CD8-positive, alpha-beta memory T cell (primary cell): ENCODE measurements at regions of chr2 and their contacts with region 1.

Region 1: GRCh38 chr2:162301151-162301804 is 17.2 kb downstream of the IFIH1 start:
- DNase-seq: peak; percentile 35 to 64 (median 41)
- H3K4me3 ChIP-seq: no peak overlapping the region
- H3K4me3 Mint-ChIP-seq: no peak overlapping the region
- H3K27ac ChIP-seq: no peak overlapping the region
- H3K27ac Mint-ChIP-seq: peak overlapping the region in 1 of 8 donors; percentile 66
- H3K4me1 ChIP-seq: no peaks in the 10 kb centered on the region
- H3K4me1 Mint-ChIP-seq: peaks cover 1 to 7% (median 6%) of the 10 kb centered on the region in 3 donors
- H3K27me3 ChIP-seq: no peaks in the 10 kb centered on the region
- H3K27me3 Mint-ChIP-seq: no peaks in the 10 kb centered on the region

Region 2: DNA sequence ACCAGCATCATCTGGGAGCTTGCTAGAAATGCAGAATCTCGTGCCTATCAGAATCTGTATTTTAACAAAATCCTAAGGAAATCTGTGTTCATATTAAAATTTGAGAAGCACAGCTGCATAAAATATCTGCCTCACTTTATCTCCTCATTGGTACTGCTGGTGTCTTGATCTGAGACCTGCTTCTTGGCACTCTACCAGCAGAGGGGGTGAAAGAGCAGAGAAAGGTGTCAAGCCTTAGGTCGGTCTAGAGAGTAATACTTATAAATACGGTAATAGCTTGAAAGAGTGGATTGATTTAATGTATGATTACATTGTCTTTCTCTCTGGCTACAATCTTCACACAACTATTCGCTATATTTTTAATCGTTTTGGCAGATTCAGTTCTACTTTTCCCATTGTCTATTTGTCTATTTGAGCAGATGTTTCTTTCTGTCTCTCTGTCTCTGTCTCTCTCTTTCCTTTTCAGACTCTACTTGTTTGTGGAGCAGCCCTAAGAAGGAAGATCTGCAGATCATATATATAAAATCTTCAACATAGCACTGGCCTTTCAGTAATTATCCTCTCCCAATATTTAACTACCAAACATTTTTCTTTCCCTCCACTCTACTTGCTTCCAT is 147.6 kb before region 1 on chr2:
- CTCF ChIA-PET with region 1: interaction called, 10 read pairs
- POLR2A ChIA-PET with region 1: no interaction called
- DNase-seq: peak; percentile 9 to 63 (median 32)
- H3K4me3 ChIP-seq: no peak overlapping the region
- H3K4me3 Mint-ChIP-seq: peak overlapping the region in 6 of 7 donors; percentile 4 to 30 (median 16)
- H3K27ac ChIP-seq: no peak overlapping the region
- H3K27ac Mint-ChIP-seq: no peak overlapping the region
- H3K4me1 ChIP-seq: no peaks in the 10 kb centered on the region
- H3K4me1 Mint-ChIP-seq: peaks cover 4 to 7% (median 5%) of the 10 kb centered on the region in 3 donors
- H3K27me3 ChIP-seq: no peaks in the 10 kb centered on the region
- H3K27me3 Mint-ChIP-seq: peaks cover 7 to 30% of the 10 kb centered on the region in 2 donors

Region 3: GRCh38 chr2:162221064-162221463 is 80.2 kb before region 1 on chr2:
- CTCF ChIA-PET with region 1: interaction called, 30 read pairs
- POLR2A ChIA-PET with region 1: no interaction called
- DNase-seq: peak; percentile 15 to 74 (median 34)
- H3K4me3 ChIP-seq: no peak overlapping the region
- H3K4me3 Mint-ChIP-seq: no peak overlapping the region
- H3K27ac ChIP-seq: no peak overlapping the region
- H3K27ac Mint-ChIP-seq: no peak overlapping the region
- H3K4me1 ChIP-seq: no peaks in the 10 kb centered on the region
- H3K4me1 Mint-ChIP-seq: peaks cover 0 to 4% (median 0%) of the 10 kb centered on the region in 3 donors
- H3K27me3 ChIP-seq: peaks cover 6% of the 10 kb centered on the region
- H3K27me3 Mint-ChIP-seq: peaks cover 16 to 54% of the 10 kb centered on the region in 2 donors